ENCODE measurements at regions of chr14 and their contacts with region 1.

Region 1: GRCh38 chr14:36070031-36070719 is 106.3 kb downstream of the PTCSC3 start:
- DNase-seq: peak; percentile 36 to 85 (median 75)
- H3K4me3 ChIP-seq: peak overlapping the region in 1 of 59 donors; percentile 15
- H3K27ac ChIP-seq: peak overlapping the region in 30 of 59 donors; percentile 1 to 72 (median 38)
- H3K27me3 ChIP-seq: no peaks in the 10 kb centered on the region
- CTCF ChIP-seq: peak in 55 of 56 donors; percentile 51 to 89 (median 75)

Region 2: GRCh38 chr14:35855876-35856481 is 214.2 kb before region 1 on chr14:
- intact Hi-C with region 1: no loop called
- DNase-seq: no peak
- H3K4me3 ChIP-seq: no peak overlapping the region
- H3K27ac ChIP-seq: no peak overlapping the region
- H3K27me3 ChIP-seq: no peaks in the 10 kb centered on the region
- CTCF ChIP-seq: no peak

Region 3: DNA sequence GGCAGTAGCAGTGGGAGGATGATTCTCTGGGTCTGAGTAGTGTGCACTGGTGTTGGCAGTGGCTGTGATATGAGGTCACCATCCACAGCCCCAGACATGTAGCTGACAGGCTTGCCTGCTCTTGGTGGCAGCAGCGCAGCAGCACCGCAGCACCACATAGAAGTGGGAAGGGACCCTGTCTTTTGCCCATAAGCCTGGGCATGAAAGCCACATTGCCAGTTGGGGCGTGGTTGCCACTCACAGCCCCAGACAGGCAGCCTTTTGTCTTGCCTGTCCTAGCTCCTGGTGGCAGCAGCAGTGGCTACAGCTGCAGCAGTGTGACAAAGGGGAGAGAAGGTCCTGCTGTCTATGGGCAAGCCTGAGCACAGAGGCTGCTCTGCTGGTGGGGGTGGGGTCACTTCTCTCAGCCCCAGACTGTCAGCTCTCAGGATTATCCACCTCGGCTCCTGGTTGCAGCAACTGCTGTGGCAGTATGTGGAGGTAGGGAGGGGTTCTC is 172.5 kb before region 1 on chr14:
- intact Hi-C with region 1: loop called in 1 of 2 experiments (anchors 5 kb)
- DNase-seq: peak; percentile 8 to 92 (median 84)
- H3K4me3 ChIP-seq: peak overlapping the region in 57 of 59 donors; percentile 9 to 71 (median 46)
- H3K27ac ChIP-seq: peak overlapping the region; percentile 43 to 97 (median 90)
- H3K27me3 ChIP-seq: no peaks in the 10 kb centered on the region
- CTCF ChIP-seq: peak in 25 of 56 donors; percentile 4 to 50 (median 23)

Region 4: DNA sequence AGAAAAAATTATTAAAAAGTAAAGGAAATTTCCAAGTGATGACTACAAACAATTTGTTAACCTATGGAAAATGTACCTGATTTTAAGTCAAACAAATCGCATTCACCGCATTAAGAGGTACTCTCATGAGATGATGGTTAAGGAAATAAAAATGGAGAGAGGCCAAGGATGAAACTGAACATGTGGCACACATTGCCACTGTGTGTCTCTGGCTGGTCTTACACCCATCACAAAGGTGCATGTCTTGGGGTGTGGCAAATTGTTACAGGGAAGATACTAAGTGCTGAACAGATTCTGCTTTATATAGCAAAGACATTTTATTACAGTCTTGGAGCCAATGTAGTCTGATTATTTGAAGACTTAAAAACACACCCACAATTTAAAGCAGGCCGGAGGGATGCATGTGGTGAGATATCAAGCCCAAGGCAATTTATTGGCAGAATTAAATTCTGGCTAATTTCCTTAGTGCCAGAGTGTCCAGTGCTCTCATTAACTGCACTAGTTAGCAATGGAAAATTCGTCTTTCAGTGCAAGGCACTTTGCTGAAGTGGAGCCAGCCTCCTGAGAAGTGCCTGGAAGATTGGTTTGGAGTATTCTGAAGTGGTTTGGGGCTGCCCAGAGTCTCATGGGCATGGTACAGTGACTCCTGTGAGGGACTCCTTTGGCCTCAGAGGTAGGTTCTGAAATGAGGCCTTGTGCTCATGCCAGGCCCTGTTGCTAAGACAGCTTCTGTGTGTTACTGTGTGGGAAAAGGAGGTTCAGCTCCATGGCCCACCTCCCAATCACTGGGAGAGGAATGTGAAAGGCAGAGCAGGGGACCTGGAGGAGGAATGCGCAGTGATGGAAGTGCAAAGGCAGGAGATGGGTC is 77.1 kb before region 1 on chr14:
- intact Hi-C with region 1: loop called in 1 of 2 experiments (anchors 10 kb)
- DNase-seq: no peak
- H3K4me3 ChIP-seq: peak overlapping the region in 2 of 59 donors; percentile 5 to 16
- H3K27ac ChIP-seq: peak overlapping the region in 49 of 59 donors; percentile 3 to 100 (median 69)
- H3K27me3 ChIP-seq: no peaks in the 10 kb centered on the region
- CTCF ChIP-seq: peak in 6 of 56 donors; percentile 9 to 54 (median 16)

Region 5: GRCh38 chr14:36320200-36320896 is 250.2 kb after region 1 on chr14 and contains the start of gene MBIP:
- intact Hi-C with region 1: loop called in 1 of 2 experiments (anchors 5 kb)
- DNase-seq: peak; percentile 79 to 97 (median 90)
- H3K4me3 ChIP-seq: peak within 1 kb of the TSS; percentile 49 to 98 (median 87)
- H3K27ac ChIP-seq: peak within 1 kb of the TSS in 51 of 59 donors; percentile 12 to 93 (median 73)
- H3K27me3 ChIP-seq: no peaks in the 10 kb centered on the region
- CTCF ChIP-seq: peak in 3 of 56 donors; percentile 12 to 16 (median 12)
- total RNA-seq, gene MBIP: 19.6 to 37.9 (median 27.3) TPM

Region 6: DNA sequence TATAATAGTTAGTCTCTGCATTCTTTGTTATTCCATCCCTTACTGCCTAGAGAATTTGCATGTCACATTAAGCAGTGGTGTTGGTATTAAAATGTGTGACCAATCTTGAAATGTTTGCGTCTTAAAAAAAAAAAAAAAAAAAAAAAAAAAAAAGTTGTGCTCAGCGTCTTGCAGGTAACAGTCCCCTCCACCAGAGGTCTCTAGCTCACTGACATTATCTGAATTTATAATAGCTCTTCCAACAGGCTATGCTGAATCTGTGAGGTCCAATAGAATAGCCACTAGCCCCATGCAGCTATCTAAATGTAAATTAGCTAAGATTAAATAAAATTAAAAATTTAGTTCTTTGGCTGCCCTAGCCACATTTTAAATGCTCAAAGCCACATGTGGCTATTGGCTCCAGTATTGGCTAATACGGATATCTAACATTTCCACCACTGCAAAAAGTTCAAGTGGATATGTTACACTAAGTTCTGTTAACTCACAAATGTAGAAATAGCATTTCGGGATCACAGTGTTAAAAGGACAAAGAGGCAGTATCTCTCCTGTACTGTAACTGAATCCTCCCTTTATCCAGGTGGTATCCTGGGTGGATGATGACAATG is 483.6 kb after region 1 on chr14:
- intact Hi-C with region 1: loop called in 1 of 2 experiments (anchors 2 kb)
- DNase-seq: no peak
- H3K4me3 ChIP-seq: no peak overlapping the region
- H3K27ac ChIP-seq: no peak overlapping the region
- H3K27me3 ChIP-seq: peaks cover 0 to 16% (median 0%) of the 10 kb centered on the region in 45 donors
- CTCF ChIP-seq: peak; percentile 13 to 80 (median 66)

Region 7: DNA sequence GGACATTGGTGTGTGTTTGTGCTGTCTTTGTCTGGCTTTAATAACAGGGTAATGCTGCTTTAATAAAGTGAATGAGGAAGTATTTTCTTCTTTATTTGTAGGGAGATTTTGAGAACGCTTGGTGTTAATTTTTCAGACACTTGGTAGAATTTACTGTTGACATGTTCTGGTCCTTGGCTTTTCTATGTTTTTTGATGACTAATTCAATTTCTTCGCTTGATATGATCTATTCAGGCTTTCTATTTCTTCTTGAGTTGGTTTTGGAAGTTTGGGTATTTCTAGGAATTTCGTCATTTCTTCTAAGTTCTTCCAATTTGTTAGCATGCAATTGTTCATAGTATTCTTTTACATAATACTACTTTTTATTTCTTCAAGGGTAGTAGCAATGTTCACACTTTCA is 1693.1 kb after region 1 on chr14:
- intact Hi-C with region 1: no loop called
- DNase-seq: no peak
- H3K4me3 ChIP-seq: no peak overlapping the region
- H3K27ac ChIP-seq: no peak overlapping the region
- H3K27me3 ChIP-seq: no peaks in the 10 kb centered on the region
- CTCF ChIP-seq: no peak

Measured in dorsolateral prefrontal cortex (tissue), 120 donors.